AG04450 (cell line): ENCODE measurements at regions of chr6 and their contacts with region 1.

Region 1: DNA sequence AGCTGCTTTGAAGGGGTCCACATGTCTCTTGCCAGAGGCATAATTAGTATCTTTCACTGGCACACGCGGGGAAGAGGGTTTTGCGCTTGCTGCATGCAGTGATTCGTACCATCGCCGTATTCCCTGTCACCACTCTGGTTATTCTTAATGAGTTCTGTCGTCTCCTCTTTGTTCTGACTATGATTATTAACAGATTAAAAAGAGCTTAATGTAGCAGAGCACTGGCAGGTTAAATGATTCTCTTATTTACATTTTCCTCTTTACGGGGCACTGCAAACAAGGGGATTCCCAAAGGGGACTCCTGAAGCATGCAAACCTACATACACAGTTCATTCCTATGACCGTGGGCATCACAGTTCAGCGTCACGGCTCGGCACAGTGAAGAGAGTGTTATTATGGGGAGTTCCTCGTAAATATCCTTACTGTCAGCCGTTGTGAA is 204.8 kb downstream of the DTNBP1 start:
- DNase-seq: no peak
- H3K4me3 ChIP-seq: no peak overlapping the region
- H3K27ac ChIP-seq: no peak overlapping the region
- H3K27me3 ChIP-seq: no peaks in the 10 kb centered on the region
- CTCF ChIP-seq: no peak

Region 2: DNA sequence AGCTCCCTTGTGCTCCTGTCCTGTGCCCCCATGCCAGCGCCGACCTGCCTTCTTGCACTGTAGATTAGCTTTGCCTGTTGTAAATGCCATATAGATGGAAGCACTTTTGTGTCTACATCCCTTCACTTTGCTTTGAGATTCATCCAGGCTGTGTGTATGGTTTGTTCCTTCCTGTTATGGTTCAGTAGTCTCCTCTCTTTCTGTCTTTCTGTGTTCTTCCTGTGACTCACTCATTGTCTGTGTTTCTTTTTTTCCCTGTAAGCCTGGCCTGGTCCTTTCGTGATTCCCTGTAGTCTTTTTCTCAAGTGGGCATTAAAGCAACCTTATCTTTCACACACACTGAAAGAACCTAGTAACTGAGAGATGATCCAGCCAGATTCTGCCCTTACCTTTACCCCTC is 145.5 kb before region 1 on chr6:
- CTCF ChIA-PET with region 1: no interaction called
- POLR2A ChIA-PET with region 1: no interaction called
- DNase-seq: no peak
- H3K4me3 ChIP-seq: no peak overlapping the region
- H3K27ac ChIP-seq: no peak overlapping the region
- H3K27me3 ChIP-seq: no peaks in the 10 kb centered on the region
- CTCF ChIP-seq: no peak

Region 3: GRCh38 chr6:15441215-15441868 is 16.7 kb before region 1 on chr6:
- CTCF ChIA-PET with region 1: interaction called, 17 read pairs
- POLR2A ChIA-PET with region 1: interaction called, 4 read pairs
- DNase-seq: no peak
- H3K4me3 ChIP-seq: no peak overlapping the region
- H3K27ac ChIP-seq: no peak overlapping the region
- H3K27me3 ChIP-seq: no peaks in the 10 kb centered on the region
- CTCF ChIP-seq: peak; percentile 94

Region 4: GRCh38 chr6:15661853-15662325 is 203.8 kb after region 1 on chr6:
- CTCF ChIA-PET with region 1: no interaction called
- POLR2A ChIA-PET with region 1: no interaction called
- DNase-seq: no peak
- H3K4me3 ChIP-seq: peak overlapping the region; percentile 76
- H3K27ac ChIP-seq: no peak overlapping the region
- H3K27me3 ChIP-seq: peaks cover 4% of the 10 kb centered on the region
- CTCF ChIP-seq: no peak